ENCODE measurements at regions of chr15 and their contacts with region 1.

Region 1: GRCh38 chr15:69475769-69476358 is 23.2 kb downstream of the RPLP1 start:
- DNase-seq: peak; percentile 75
- ATAC-seq: peak; percentile 86 to 87

Region 2: DNA sequence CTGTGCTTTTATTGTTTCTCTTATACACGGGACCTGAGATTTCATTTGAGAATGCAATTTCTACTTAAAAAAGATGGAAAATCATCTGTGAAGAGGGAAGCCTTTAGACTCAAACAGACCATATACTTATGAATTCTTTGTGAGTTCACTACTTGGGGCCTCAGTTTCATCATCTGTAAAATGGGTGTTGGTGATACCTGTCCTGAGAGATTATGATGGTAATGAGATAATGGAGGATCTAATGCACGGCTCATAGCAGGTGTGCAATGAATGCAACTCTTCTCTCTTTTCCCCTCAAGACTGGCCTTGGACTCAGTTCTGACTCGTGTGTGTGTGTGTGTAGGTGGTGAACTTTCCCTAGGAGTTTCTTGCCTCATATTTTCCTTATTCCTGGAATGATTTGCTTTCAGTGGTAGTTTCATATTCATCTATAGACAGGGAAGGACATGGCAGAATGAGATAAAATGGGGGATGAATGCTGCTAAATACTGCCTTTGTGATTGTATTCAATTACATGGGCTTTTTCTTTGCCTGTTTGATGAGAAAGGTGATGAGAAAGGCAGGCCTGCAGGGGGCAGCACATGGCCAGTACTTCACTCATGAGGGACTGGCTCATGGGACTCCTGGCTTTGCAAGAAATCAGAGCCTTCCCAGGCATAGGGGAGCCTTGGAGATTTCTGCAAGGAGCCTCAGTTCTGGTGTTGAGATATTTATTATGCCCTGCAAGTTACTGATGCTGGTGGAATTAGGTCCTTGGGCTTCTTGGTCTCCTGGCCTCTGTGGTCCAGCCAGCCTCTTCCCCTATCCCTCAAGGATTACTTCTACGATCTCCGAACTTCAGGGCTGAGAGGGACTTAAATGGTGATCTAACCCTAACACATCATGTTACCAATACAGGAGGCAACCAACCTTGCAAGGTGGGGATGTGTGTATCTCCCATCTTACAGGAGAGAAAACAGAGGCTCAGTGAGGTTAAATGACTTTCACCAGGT is 47.4 kb after region 1 on chr15:
- intact Hi-C with region 1: no loop called
- DNase-seq: peak; percentile 68
- ATAC-seq: peak; percentile 79 to 87

Region 3: DNA sequence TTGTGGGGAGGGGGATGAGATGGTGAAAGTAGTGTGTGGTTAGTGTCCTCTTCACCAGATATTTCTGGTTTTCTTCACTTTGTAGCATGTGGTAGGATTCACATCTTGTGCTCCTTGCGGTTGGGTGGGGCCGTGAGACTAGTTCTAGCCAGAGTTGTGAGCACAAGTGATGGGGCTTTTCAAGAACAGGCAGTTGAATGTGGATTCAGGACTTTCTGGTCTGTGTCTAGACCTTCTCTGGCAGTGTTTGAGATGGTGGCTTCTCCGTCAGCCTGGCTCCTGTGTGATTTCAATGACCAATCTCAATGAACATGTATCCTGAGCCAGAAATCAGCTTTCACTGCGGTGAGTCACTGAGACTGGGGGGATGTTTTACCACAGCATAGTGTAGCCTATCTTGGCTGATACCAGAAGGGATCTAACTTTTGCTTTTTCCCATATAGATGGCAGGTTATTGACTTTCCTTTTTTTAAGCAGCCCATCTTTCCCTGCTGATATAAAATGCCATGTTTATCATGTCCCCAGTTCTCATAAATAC is 59.3 kb after region 1 on chr15:
- intact Hi-C with region 1: loop called in 1 of 2 experiments (anchors 10 kb)
- DNase-seq: no peak
- ATAC-seq: no peak

Region 4: GRCh38 chr15:70466895-70467529 is 991.1 kb after region 1 on chr15:
- intact Hi-C with region 1: loop called in 1 of 2 experiments (anchors 5 kb)
- DNase-seq: peak; percentile 57
- ATAC-seq: peak; percentile 42 to 63